B cell (primary cell): ENCODE measurements at regions of chr1 and their contacts with region 1.

Region 1: DNA sequence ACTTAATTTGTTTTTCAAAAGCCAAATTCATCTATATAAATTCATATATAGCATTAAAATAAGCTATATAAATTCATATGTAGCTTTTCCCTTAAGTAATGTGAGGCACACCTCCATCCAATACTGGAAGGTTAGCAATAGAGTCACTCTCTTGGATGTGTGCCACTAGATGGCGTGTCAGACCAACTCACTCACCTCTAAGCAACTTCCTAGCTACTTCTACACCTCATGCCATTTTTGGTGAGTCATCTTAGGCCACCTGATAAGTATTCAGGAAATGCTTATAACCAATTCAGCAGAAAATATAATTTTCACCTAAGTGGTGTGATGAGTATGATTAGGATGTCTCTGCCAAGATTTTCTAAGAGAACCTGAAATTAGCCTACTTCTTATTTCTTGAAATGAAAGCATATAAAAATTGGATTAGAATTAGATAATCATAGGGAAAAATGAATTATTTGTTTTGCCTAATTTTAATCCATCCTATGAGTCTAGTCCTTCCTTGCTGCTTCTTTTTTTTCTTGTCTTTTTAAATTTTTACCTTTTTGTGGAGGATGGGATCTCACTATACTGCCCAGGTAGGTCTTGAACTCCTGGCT is 34.4 kb upstream of the TADA1 start:
- DNase-seq: peak; percentile 87
- ATAC-seq: peak; percentile 97
- H3K4me3 ChIP-seq: no peak overlapping the region
- H3K4me3 Mint-ChIP-seq: no peak overlapping the region
- H3K27ac ChIP-seq: no peak overlapping the region
- H3K27ac Mint-ChIP-seq: no peak overlapping the region
- H3K4me1 ChIP-seq: peaks cover 6 to 8% of the 10 kb centered on the region in 2 donors
- H3K4me1 Mint-ChIP-seq: peaks cover 6% of the 10 kb centered on the region
- H3K27me3 ChIP-seq: no peaks in the 10 kb centered on the region
- H3K27me3 Mint-ChIP-seq: no peaks in the 10 kb centered on the region
- CTCF ChIP-seq: peak; percentile 96

Region 2: DNA sequence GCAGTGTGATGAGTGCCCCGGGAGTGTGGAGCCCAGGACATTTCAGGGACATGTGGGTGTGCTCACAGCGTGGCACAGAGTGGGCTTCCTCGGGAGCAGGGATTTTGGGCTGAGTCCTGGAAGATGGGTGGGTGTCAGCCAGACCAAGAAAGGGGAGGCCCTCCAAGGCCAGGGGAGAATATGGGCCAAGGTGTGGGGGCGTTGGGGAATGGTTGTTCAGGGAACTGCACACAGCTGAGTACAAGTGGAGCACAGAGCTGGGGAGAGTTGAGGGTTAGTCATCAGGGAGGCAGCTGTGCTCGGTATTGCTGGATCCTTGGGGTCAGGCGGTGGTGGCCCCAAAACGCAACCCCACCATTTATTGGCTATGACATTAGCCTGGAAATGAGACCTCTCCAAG is 65.7 kb before region 1 on chr1:
- CTCF ChIA-PET with region 1: no interaction called
- POLR2A ChIA-PET with region 1: no interaction called
- intact Hi-C with region 1: no loop called
- DNase-seq: no peak
- ATAC-seq: no peak
- H3K4me3 ChIP-seq: no peak overlapping the region
- H3K4me3 Mint-ChIP-seq: no peak overlapping the region
- H3K27ac ChIP-seq: peak overlapping the region in 1 of 2 donors; percentile 6
- H3K27ac Mint-ChIP-seq: no peak overlapping the region
- H3K4me1 ChIP-seq: peaks cover 15% of the 10 kb centered on the region in 2 donors
- H3K4me1 Mint-ChIP-seq: peaks cover 31% of the 10 kb centered on the region
- H3K27me3 ChIP-seq: no peaks in the 10 kb centered on the region
- H3K27me3 Mint-ChIP-seq: no peaks in the 10 kb centered on the region
- CTCF ChIP-seq: no peak

Region 3: GRCh38 chr1:166875734-166876539 is 34.6 kb before region 1 on chr1 and contains the start of gene TADA1:
- CTCF ChIA-PET with region 1: interaction called, 16 read pairs
- POLR2A ChIA-PET with region 1: no interaction called
- intact Hi-C with region 1: no loop called
- DNase-seq: peak; percentile 99
- ATAC-seq: peak; percentile 92
- H3K4me3 ChIP-seq: peak within 1 kb of the TSS; percentile 44 to 80 (median 74)
- H3K4me3 Mint-ChIP-seq: peak within 1 kb of the TSS; percentile 98
- H3K27ac ChIP-seq: peak within 1 kb of the TSS; percentile 68 to 86
- H3K27ac Mint-ChIP-seq: peak within 1 kb of the TSS; percentile 99
- H3K4me1 ChIP-seq: peaks cover 12 to 13% of the 10 kb centered on the region in 2 donors
- H3K4me1 Mint-ChIP-seq: peaks cover 38% of the 10 kb centered on the region
- H3K27me3 ChIP-seq: no peaks in the 10 kb centered on the region
- H3K27me3 Mint-ChIP-seq: no peaks in the 10 kb centered on the region
- CTCF ChIP-seq: no peak
- total RNA-seq, gene TADA1: 12.9 and 13.1 TPM in 2 replicates

Region 4: DNA sequence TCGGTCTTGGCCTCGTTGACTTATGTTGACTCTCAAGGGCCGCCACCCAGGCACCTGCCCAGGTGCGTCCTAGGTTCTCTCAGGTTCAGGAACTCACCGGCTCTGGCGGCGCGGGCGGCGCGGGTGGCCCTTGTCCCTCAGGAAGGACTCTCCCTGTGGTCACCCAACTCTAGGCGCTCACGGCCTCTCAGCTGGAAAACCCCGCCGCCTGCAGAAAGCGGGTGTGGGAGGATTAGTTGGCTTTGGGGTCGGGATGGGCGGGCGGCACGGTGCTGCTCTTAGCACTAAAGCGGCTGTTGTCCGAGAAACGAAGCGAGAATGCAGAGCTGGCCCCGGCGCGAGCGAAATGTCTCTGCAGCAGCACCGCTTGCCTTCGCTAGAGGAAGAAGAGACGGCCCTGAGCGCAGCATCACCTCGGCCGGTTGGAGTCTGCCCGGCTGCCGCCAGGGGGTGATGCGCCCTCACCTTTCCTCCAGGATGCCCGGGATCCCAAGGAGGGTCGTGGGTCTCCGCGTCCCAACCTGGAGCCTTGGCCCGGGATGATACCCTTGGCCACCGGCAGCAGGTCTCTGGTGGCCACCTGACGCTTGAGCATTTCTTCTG is 26.4 kb before region 1 on chr1:
- CTCF ChIA-PET with region 1: interaction called, 10 read pairs
- POLR2A ChIA-PET with region 1: no interaction called
- intact Hi-C with region 1: no loop called
- DNase-seq: peak; percentile 56
- ATAC-seq: peak; percentile 63
- H3K4me3 ChIP-seq: peak overlapping the region in 1 of 5 experiments; percentile 1
- H3K4me3 Mint-ChIP-seq: no peak overlapping the region
- H3K27ac ChIP-seq: no peak overlapping the region
- H3K27ac Mint-ChIP-seq: no peak overlapping the region
- H3K4me1 ChIP-seq: peaks cover 14 to 18% of the 10 kb centered on the region in 2 donors
- H3K4me1 Mint-ChIP-seq: peaks cover 10% of the 10 kb centered on the region
- H3K27me3 ChIP-seq: peaks cover 0 to 35% (median 25%) of the 10 kb centered on the region in 4 experiments
- H3K27me3 Mint-ChIP-seq: peaks cover 34% of the 10 kb centered on the region
- CTCF ChIP-seq: peak; percentile 69

Region 5: GRCh38 chr1:166920561-166921475 is 10.3 kb after region 1 on chr1:
- CTCF ChIA-PET with region 1: interaction called, 85 read pairs
- POLR2A ChIA-PET with region 1: interaction called, 3 read pairs
- intact Hi-C with region 1: no loop called
- DNase-seq: peak; percentile 57
- ATAC-seq: peak; percentile 55
- H3K4me3 ChIP-seq: peak overlapping the region in 3 of 5 experiments; percentile 33 to 59 (median 46)
- H3K4me3 Mint-ChIP-seq: peak overlapping the region; percentile 86
- H3K27ac ChIP-seq: no peak overlapping the region
- H3K27ac Mint-ChIP-seq: no peak overlapping the region
- H3K4me1 ChIP-seq: peaks cover 35 to 38% of the 10 kb centered on the region in 2 donors
- H3K4me1 Mint-ChIP-seq: peaks cover 33% of the 10 kb centered on the region
- H3K27me3 ChIP-seq: peaks cover 0 to 30% (median 23%) of the 10 kb centered on the region in 4 experiments
- H3K27me3 Mint-ChIP-seq: peaks cover 39% of the 10 kb centered on the region
- CTCF ChIP-seq: no peak

Region 6: GRCh38 chr1:166929911-166930310 is 19.4 kb after region 1 on chr1:
- CTCF ChIA-PET with region 1: interaction called, 85 read pairs
- POLR2A ChIA-PET with region 1: no interaction called
- intact Hi-C with region 1: no loop called
- DNase-seq: no peak
- ATAC-seq: no peak
- H3K4me3 ChIP-seq: no peak overlapping the region
- H3K4me3 Mint-ChIP-seq: no peak overlapping the region
- H3K27ac ChIP-seq: no peak overlapping the region
- H3K27ac Mint-ChIP-seq: no peak overlapping the region
- H3K4me1 ChIP-seq: peaks cover 10 to 20% of the 10 kb centered on the region in 2 donors
- H3K4me1 Mint-ChIP-seq: peaks cover 20% of the 10 kb centered on the region
- H3K27me3 ChIP-seq: peaks cover 0 to 7% (median 3%) of the 10 kb centered on the region in 4 experiments
- H3K27me3 Mint-ChIP-seq: peaks cover 3% of the 10 kb centered on the region
- CTCF ChIP-seq: no peak

Region 7: DNA sequence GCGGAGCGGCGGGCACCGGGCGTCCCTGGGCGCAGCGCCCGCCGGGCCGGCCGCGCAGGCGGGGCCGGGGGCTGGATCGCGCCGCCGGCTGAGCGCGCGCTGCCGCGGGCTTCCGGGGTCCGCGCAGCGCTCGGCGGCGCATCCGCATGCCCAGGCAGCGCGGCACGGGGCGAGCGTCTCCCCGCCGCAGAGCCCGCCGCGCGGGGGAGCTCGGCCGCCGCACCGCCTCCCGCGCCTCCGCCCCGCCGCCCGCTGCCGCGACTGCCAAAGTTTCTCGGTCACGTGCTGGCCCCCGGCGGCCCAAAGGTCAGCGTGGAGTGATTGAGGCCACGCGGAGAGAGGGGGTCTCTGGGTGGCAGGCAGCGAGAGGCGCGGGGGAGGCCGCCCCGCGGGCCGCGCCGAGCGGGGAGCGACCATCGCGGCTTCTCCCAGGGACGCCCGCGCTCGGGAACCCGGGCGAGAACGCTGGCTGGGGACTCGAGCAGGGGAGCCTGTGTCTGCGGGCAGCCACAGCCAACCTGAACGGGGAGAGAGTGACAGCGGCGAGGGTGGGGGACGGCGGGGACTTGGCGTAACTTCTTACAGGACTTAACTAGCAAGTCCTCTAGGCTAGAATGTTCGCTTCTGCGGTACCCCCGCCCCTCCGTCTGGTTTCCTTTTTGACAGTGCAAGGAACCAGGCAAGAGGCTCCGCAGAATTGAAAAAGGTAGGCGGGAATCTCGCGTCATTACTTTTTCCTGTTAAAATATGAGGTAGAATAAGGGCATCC is 65.0 kb after region 1 on chr1 and contains the start of gene ILDR2:
- CTCF ChIA-PET with region 1: interaction called, 3 read pairs
- POLR2A ChIA-PET with region 1: no interaction called
- intact Hi-C with region 1: loop called (anchors 2 kb)
- DNase-seq: peak; percentile 68
- ATAC-seq: peak; percentile 87
- H3K4me3 ChIP-seq: peak within 1 kb of the TSS; percentile 21 to 71 (median 61)
- H3K4me3 Mint-ChIP-seq: peak within 1 kb of the TSS; percentile 90
- H3K27ac ChIP-seq: no peak within 1 kb of the TSS
- H3K27ac Mint-ChIP-seq: peak within 1 kb of the TSS; percentile 27
- H3K4me1 ChIP-seq: peaks cover 18 to 20% of the 10 kb centered on the region in 2 donors
- H3K4me1 Mint-ChIP-seq: peaks cover 20% of the 10 kb centered on the region
- H3K27me3 ChIP-seq: peaks cover 0 to 41% (median 32%) of the 10 kb centered on the region in 4 experiments
- H3K27me3 Mint-ChIP-seq: peaks cover 36% of the 10 kb centered on the region
- CTCF ChIP-seq: no peak
- total RNA-seq, gene ILDR2: 0.36 TPM in 1 of 2 replicates, not detected in the other

Region 8: GRCh38 chr1:167043752-167044488 is 133.4 kb after region 1 on chr1:
- CTCF ChIA-PET with region 1: interaction called, 12 read pairs
- POLR2A ChIA-PET with region 1: no interaction called
- intact Hi-C with region 1: loop called (anchors 5 kb)
- DNase-seq: peak; percentile 77
- ATAC-seq: peak; percentile 91
- H3K4me3 ChIP-seq: peak overlapping the region; percentile 48 to 69 (median 53)
- H3K4me3 Mint-ChIP-seq: peak overlapping the region; percentile 83
- H3K27ac ChIP-seq: no peak overlapping the region
- H3K27ac Mint-ChIP-seq: peak overlapping the region; percentile 75
- H3K4me1 ChIP-seq: peaks cover 12 to 16% of the 10 kb centered on the region in 2 donors
- H3K4me1 Mint-ChIP-seq: peaks cover 12% of the 10 kb centered on the region
- H3K27me3 ChIP-seq: peaks cover 0 to 6% (median 6%) of the 10 kb centered on the region in 4 experiments
- H3K27me3 Mint-ChIP-seq: peaks cover 23% of the 10 kb centered on the region
- CTCF ChIP-seq: no peak

Region 9: DNA sequence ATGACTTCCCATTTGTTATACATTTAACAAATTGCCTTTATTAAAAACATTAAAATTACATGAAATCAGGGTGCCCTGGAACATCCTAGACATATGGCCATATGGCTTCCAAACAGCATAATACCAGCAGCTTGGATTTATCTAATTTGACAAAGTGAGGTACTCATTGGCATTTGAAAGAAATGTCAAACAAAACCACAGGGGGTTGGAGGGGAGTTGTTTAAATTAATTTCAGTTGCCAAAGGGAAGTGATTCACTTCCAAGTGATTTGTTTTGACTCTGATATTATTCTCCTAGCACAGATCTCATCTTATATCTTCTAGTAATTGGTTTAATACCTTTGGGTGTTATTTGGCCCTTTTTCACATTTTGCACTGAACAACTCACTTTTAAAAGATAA is 285.7 kb after region 1 on chr1:
- CTCF ChIA-PET with region 1: no interaction called
- POLR2A ChIA-PET with region 1: no interaction called
- intact Hi-C with region 1: no loop called
- DNase-seq: no peak
- ATAC-seq: no peak
- H3K4me3 ChIP-seq: no peak overlapping the region
- H3K4me3 Mint-ChIP-seq: no peak overlapping the region
- H3K27ac ChIP-seq: no peak overlapping the region
- H3K27ac Mint-ChIP-seq: no peak overlapping the region
- H3K4me1 ChIP-seq: no peaks in the 10 kb centered on the region
- H3K4me1 Mint-ChIP-seq: no peaks in the 10 kb centered on the region
- H3K27me3 ChIP-seq: no peaks in the 10 kb centered on the region
- H3K27me3 Mint-ChIP-seq: peaks cover 7% of the 10 kb centered on the region
- CTCF ChIP-seq: no peak